Activated CD4-positive, alpha-beta memory T cell treated with anti-CD3 and anti-CD28 coated beads for 36 hours (primary cell): ENCODE measurements at regions of chr3 and their contacts with region 1.

Region 1: GRCh38 chr3:177359593-177360357 is 162.5 kb upstream of the TBL1XR1 start:
- DNase-seq: peak; percentile 97
- H3K4me3 Mint-ChIP-seq: peak overlapping the region; percentile 70
- H3K27ac Mint-ChIP-seq: peak overlapping the region; percentile 94
- H3K4me1 Mint-ChIP-seq: peaks cover 55% of the 10 kb centered on the region
- H3K27me3 Mint-ChIP-seq: no peaks in the 10 kb centered on the region

Region 2: DNA sequence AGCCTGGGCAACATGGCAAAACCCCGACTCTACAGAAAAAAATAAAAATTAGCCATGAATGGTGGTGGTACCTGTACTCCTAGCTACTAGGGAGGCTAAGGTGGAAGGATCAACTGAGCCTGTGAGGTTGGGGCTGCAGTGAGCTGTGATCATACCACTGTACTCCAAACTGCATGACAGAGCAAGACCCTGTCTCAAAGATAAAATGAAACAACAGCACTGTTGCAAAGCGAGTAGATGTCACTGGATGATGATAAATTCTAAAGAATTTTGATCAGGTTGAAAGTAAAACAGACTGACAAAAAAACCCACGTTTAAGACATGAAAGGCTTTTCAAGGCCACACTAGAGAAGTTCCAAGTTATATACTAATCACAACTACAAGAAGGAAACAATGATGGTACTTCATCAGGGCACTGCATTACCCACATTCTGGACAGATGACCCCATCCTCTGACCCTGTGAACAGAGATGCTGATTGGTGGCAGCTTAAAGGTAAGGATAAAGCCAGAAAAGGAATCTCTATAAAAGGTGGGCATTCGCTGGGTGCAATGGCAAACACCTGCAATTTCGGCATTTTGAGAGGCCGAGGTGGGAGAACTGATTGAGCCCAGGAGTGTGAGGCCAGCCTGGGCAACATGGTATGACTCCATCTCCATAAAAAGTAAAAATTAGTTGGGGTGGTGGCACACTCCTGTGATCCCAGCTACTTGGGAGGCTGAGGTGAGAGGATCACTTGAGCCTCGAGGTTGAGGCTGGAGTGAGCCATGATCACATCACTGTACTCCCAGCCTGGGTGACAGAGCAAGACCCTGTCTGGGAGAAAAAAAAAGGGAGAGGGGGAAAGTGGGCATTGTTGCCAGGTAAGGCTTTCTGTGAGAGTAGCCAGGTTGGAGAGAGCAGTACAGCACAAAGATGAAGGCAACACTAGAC is 221.7 kb before region 1 on chr3:
- CTCF ChIA-PET with region 1: interaction called, 3 read pairs
- POLR2A ChIA-PET with region 1: no interaction called
- intact Hi-C with region 1: loop called (anchors 2 kb)
- DNase-seq: peak; percentile 25
- H3K4me3 Mint-ChIP-seq: peak overlapping the region; percentile 2
- H3K27ac Mint-ChIP-seq: peak overlapping the region; percentile 70
- H3K4me1 Mint-ChIP-seq: peaks cover 70% of the 10 kb centered on the region
- H3K27me3 Mint-ChIP-seq: no peaks in the 10 kb centered on the region

Region 3: DNA sequence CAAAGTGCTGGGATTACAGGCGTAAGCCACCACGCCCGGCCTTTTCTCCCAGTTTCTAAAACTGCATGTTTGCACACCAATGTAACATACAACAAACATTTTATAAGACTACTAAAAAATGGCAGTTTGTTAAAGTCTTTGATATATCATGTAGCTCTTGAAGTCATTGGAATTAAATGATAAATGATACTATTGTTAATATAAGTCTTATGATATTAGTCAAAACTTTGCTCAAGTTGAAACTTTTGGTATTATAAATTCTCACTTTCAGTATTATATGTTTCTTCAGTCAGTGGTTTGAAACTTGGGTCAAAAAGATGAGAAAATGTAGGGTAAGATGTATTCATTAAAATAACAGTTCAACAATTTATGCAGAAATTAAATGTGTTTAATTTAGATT is 44.9 kb before region 1 on chr3:
- CTCF ChIA-PET with region 1: interaction called, 7 read pairs
- POLR2A ChIA-PET with region 1: no interaction called
- intact Hi-C with region 1: loop called (anchors 1 kb)
- DNase-seq: peak; percentile 13
- H3K4me3 Mint-ChIP-seq: no peak overlapping the region
- H3K27ac Mint-ChIP-seq: peak overlapping the region; percentile 18
- H3K4me1 Mint-ChIP-seq: peaks cover 23% of the 10 kb centered on the region
- H3K27me3 Mint-ChIP-seq: peaks cover 2% of the 10 kb centered on the region

Region 4: DNA sequence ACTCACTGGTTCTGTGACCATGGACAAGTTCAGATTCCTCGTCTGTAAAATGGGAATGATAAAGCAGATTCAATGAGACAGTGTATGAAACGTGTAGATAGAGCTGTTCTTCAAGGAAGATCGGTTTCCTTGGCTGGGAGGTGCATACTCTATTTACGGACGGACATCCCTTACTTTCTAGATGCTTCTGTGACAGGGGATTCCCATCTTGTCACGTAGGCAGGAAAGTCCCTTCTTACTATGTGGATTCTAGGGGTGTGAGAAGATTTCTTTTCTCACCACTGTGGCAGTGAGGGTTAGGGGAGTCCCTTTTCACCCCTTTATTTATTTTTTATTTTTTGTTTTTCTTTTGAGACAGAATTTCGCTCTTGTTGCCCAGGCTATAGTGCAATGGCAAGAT is 18.4 kb after region 1 on chr3:
- CTCF ChIA-PET with region 1: interaction called, 3 read pairs
- POLR2A ChIA-PET with region 1: no interaction called
- intact Hi-C with region 1: loop called (anchors 2 kb)
- DNase-seq: no peak
- H3K4me3 Mint-ChIP-seq: no peak overlapping the region
- H3K27ac Mint-ChIP-seq: no peak overlapping the region
- H3K4me1 Mint-ChIP-seq: peaks cover 7% of the 10 kb centered on the region
- H3K27me3 Mint-ChIP-seq: no peaks in the 10 kb centered on the region

Region 5: DNA sequence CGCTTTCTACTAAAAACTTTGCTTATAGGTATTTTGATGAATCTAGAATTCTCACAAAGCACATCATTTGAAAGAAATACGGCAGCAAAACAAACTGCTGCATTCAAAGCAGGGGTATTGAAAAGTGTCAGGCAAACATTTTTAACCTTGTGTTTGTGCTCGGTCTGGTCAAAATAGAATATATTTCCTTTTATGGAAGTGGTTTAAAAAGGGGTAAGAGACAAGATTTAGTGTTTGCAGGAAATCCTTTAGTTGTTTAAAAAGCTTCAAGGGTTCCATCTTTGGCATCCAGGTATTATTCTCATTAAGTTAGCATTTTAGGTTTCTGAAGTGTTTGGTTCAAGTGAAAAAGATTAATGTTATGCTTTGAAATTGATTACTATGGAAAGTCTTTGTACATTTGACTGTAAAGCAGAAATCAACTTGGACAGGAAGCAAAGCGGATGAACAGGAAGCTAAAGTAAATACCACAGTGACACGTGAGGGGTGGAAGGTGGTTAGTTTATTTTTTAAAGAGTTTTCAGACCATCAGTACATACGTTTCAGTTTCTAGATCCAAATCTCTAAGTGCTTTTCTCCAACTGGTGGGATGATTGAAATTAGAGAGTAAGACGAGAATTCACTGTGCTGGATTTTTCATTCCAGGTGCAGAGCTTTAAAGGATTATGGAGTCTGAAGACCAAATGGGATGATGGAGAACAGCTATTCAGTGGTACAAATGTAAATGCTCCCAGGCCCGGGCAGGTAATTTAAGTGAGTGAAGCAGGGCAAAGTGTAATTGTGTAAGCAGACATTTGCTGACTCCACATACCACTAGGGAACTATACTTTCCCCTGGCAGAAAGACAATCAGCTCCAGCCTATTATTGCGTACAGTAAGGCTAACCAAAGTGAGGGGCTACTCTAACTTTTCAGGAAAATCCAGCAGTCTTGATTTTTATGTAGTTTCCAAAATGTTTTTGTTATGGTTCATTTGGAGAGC is 179.3 kb after region 1 on chr3:
- CTCF ChIA-PET with region 1: no interaction called
- POLR2A ChIA-PET with region 1: no interaction called
- intact Hi-C with region 1: loop called (anchors 5 kb)
- DNase-seq: no peak
- H3K4me3 Mint-ChIP-seq: peak overlapping the region; percentile 42
- H3K27ac Mint-ChIP-seq: peak overlapping the region; percentile 67
- H3K4me1 Mint-ChIP-seq: peaks cover 40% of the 10 kb centered on the region
- H3K27me3 Mint-ChIP-seq: no peaks in the 10 kb centered on the region

Region 6: GRCh38 chr3:177777699-177778098 is 417.9 kb after region 1 on chr3:
- CTCF ChIA-PET with region 1: interaction called, 4 read pairs
- POLR2A ChIA-PET with region 1: no interaction called
- intact Hi-C with region 1: loop called (anchors 2 kb)
- DNase-seq: peak; percentile 61
- H3K4me3 Mint-ChIP-seq: no peak overlapping the region
- H3K27ac Mint-ChIP-seq: no peak overlapping the region
- H3K4me1 Mint-ChIP-seq: peaks cover 16% of the 10 kb centered on the region
- H3K27me3 Mint-ChIP-seq: no peaks in the 10 kb centered on the region